ENCODE measurements at regions of chr12 and their contacts with region 1.

Region 1: GRCh38 chr12:95473884-95474659 is at the start of gene METAP2:
- DNase-seq: peak; percentile 87
- ATAC-seq: peak; percentile 99
- H3K4me3 Mint-ChIP-seq: peak within 1 kb of the TSS; percentile 99
- H3K27ac Mint-ChIP-seq: peak within 1 kb of the TSS; percentile 99
- H3K4me1 Mint-ChIP-seq: peaks cover 27% of the 10 kb centered on the region
- H3K27me3 Mint-ChIP-seq: no peaks in the 10 kb centered on the region
- total RNA-seq, gene METAP2: 64.3 to 71.2 TPM

Region 2: DNA sequence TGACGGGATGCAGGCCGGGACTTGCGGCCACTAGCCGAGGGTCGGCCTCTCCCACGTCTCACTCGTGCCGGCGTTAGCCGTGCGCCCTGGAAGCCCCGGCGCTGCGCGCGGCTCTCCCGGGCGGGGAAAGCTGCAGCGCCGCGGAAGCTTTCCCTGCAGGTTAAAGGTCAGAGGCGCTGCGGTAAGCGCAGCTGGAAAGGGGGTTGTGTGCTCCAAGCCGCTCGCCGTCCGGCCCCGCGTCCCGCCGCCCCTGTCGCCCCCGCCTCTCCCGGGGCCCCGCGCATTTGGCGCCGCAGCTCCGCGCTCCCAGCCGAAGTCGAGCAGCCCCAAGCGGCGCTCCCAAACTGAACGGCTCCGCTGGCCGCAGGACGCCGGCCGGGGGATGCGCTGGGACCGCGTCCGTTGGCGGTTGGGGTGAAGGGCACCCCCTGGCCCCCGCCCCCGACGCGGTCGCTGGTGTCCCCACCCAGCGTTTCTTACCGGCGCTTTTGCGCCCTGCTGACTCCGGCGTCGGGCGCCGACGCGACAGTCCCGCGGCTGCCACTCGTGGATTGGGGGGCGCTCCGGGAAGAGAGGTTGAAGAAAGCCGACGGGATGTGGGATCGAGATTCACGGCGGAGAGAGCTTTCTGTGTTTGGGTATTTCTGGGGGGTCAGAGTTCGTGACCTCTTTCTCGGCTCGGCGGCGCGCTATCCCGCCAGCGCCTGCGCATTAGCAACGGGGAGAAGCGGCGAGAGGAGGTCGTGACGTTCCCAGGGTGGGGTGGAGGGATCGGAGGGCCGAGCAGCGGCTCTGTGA is 401.0 kb before region 1 on chr12 and contains the start of gene NR2C1:
- POLR2A ChIA-PET with region 1: interaction called, 12 read pairs
- DNase-seq: peak; percentile 88
- ATAC-seq: peak; percentile 98
- H3K4me3 Mint-ChIP-seq: peak within 1 kb of the TSS; percentile 96
- H3K27ac Mint-ChIP-seq: peak within 1 kb of the TSS; percentile 85
- H3K4me1 Mint-ChIP-seq: peaks cover 6% of the 10 kb centered on the region
- H3K27me3 Mint-ChIP-seq: no peaks in the 10 kb centered on the region
- total RNA-seq, gene NR2C1: 38.4 to 46.5 TPM

Region 3: GRCh38 chr12:95217377-95218149 is 256.5 kb before region 1 on chr12 and contains the starts of genes FGD6 and VEZT:
- POLR2A ChIA-PET with region 1: interaction called, 13 read pairs
- DNase-seq: peak; percentile 93
- ATAC-seq: peak; percentile 96
- H3K4me3 Mint-ChIP-seq: peak within 1 kb of the TSS; percentile 93
- H3K27ac Mint-ChIP-seq: peak within 1 kb of the TSS; percentile 95
- H3K4me1 Mint-ChIP-seq: peaks cover 16% of the 10 kb centered on the region
- H3K27me3 Mint-ChIP-seq: peaks cover 9% of the 10 kb centered on the region
- total RNA-seq, gene FGD6: 0.45 to 0.64 TPM
- total RNA-seq, gene VEZT: 33.7 to 37.1 TPM

Measured in activated naive CD8-positive, alpha-beta T cell treated with anti-CD3 and anti-CD28 coated beads, Interleukin-2, amount 10 ng/mL, durations not matched to agents 7 days and 5 days (primary cell).